PC-9 (cell line): ENCODE measurements at regions of chr22 and their contacts with region 1.

Region 1: GRCh38 chr22:43110444-43110926 is at the start of gene BIK:
- DNase-seq: peak in 1 of 2 experiments; percentile 28
- H3K4me3 ChIP-seq: peak within 1 kb of the TSS; percentile 89
- H3K27ac ChIP-seq: no peak within 1 kb of the TSS
- H3K4me1 ChIP-seq: peaks cover 23% of the 10 kb centered on the region
- H3K27me3 ChIP-seq: peaks cover 4% of the 10 kb centered on the region; the same call in 1 of the 2 replicates
- CTCF ChIP-seq: 0 out of 2 replicates have a peak, but pooled peaks have one; percentile 22
- total RNA-seq, gene BIK: 10.6 and 14.5 TPM in 2 replicates

Region 2: DNA sequence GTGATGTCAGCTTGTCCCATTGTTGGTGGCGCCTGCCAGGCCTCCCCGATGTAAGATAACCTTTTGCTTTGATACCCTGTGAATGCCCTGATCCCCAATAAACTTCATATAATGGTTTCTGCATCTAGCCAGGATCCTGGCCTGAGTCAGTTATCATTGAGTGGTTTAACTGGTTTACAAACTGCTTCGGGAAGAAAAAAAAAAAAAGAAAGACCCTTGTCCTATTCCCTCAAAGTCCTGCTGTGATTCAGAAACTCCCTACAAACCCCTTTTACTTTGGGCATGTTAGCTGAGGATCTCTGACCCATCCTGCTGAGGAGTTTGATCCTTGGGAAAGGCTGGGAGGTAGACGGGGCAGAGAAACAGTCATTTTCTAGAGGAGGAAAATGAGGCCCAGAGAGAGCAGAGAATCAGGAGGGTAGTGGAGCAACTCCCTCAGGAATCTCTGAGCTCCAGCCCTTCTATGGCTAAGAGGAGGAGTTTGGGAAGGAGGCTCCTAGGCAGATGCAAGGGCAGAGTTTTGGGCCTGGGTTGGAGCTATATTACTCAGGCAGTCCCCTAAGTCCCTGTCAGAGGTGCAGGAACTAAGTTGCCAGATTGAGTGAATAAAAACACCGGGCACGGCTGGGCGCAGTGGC is 455.9 kb before region 1 on chr22:
- CTCF ChIA-PET with region 1: no interaction called
- POLR2A ChIA-PET with region 1: interaction called, 22 read pairs
- intact Hi-C with region 1: no loop called
- DNase-seq: peak in 1 of 2 experiments; percentile 67
- H3K4me3 ChIP-seq: peak overlapping the region; percentile 7; the same call in 1 of the 2 replicates
- H3K27ac ChIP-seq: peak overlapping the region; percentile 65
- H3K4me1 ChIP-seq: peaks cover 29% of the 10 kb centered on the region
- H3K27me3 ChIP-seq: no peaks in the 10 kb centered on the region
- CTCF ChIP-seq: no peak

Region 3: GRCh38 chr22:43537014-43537585 is 426.6 kb after region 1 on chr22:
- CTCF ChIA-PET with region 1: no interaction called
- POLR2A ChIA-PET with region 1: no interaction called
- intact Hi-C with region 1: no loop called
- DNase-seq: no peak
- H3K4me3 ChIP-seq: no peak overlapping the region
- H3K27ac ChIP-seq: no peak overlapping the region
- H3K4me1 ChIP-seq: no peaks in the 10 kb centered on the region
- H3K27me3 ChIP-seq: peaks cover 100% of the 10 kb centered on the region
- CTCF ChIP-seq: no peak; the same call in 1 of the 2 replicates